Calu3 (cell line): ENCODE measurements at regions of chrX and their contacts with region 1.

Region 1: DNA sequence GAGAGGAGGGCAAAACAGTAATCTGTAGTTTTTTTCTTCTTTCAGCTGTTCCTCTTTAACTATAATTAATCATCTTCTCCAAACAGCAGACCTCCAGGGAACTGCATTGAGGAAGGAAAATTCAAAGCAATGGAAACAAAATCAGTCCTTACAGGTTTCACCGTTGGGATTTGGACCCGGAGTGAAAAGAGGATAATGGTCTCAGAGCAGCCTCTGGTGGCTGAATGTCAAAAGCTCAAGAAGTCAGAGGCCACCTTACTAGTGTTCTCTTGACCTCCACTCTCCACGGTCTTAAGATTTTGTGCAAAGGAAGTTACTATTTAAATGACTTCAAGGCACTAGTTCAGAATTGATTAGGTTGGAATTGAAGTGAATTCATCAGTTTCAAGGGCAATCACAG is 16.0 kb upstream of the MID1 start:
- DNase-seq: peak; percentile 56
- H3K4me3 Mint-ChIP-seq: peak overlapping the region; percentile 28
- H3K27ac Mint-ChIP-seq: peak overlapping the region; percentile 75
- H3K4me1 Mint-ChIP-seq: peaks cover 22% of the 10 kb centered on the region
- H3K27me3 Mint-ChIP-seq: no peaks in the 10 kb centered on the region
- CTCF ChIP-seq: peak; percentile 28

Region 2: GRCh38 chrX:10254741-10255140 is 381.6 kb before region 1 on chrX:
- CTCF ChIA-PET with region 1: no interaction called
- intact Hi-C with region 1: loop called (anchors 1 kb)
- DNase-seq: peak; percentile 43
- H3K4me3 Mint-ChIP-seq: no peak overlapping the region
- H3K27ac Mint-ChIP-seq: no peak overlapping the region
- H3K4me1 Mint-ChIP-seq: no peaks in the 10 kb centered on the region
- H3K27me3 Mint-ChIP-seq: no peaks in the 10 kb centered on the region
- CTCF ChIP-seq: peak; percentile 45

Region 3: GRCh38 chrX:10326578-10326977 is 309.8 kb before region 1 on chrX:
- CTCF ChIA-PET with region 1: no interaction called
- intact Hi-C with region 1: loop called (anchors 5 kb)
- DNase-seq: peak; percentile 30
- H3K4me3 Mint-ChIP-seq: no peak overlapping the region
- H3K27ac Mint-ChIP-seq: no peak overlapping the region
- H3K4me1 Mint-ChIP-seq: peaks cover 14% of the 10 kb centered on the region
- H3K27me3 Mint-ChIP-seq: no peaks in the 10 kb centered on the region
- CTCF ChIP-seq: no peak